Activated CD4-positive, alpha-beta T cell treated with anti-CD3 and anti-CD28 coated beads, Interleukin-2, amount 10 ng/mL, durations not matched to agents 24 days and 14 days (primary cell): ENCODE measurements at regions of chr21 and their contacts with region 1.

Region 1: DNA sequence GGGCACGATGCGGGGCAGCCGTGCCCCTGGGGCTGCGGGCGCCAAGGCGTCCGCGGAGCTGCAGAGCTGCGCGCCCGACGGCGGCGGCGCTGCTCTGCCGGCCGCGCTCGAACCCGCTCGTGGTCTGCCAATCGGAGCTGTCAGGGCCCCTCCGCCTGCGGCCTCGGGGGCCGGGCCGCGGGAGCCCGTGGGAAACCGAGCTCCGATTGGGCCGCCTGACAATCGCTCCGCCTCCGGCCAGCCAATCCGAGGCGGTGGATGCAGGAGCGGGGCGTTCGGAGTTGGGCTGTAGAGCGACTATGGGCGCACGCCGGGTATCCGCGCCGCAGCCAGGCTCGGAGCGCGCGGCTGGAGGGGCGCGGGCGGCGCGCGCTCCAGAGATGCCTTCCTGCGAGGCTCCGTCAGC is 100.5 kb upstream of the SOD1 start:
- DNase-seq: peak; percentile 98
- H3K4me3 Mint-ChIP-seq: peak overlapping the region; percentile 88
- H3K27ac Mint-ChIP-seq: no peak overlapping the region
- H3K4me1 Mint-ChIP-seq: peaks cover 37% of the 10 kb centered on the region
- H3K27me3 Mint-ChIP-seq: peaks cover 30% of the 10 kb centered on the region

Region 2: DNA sequence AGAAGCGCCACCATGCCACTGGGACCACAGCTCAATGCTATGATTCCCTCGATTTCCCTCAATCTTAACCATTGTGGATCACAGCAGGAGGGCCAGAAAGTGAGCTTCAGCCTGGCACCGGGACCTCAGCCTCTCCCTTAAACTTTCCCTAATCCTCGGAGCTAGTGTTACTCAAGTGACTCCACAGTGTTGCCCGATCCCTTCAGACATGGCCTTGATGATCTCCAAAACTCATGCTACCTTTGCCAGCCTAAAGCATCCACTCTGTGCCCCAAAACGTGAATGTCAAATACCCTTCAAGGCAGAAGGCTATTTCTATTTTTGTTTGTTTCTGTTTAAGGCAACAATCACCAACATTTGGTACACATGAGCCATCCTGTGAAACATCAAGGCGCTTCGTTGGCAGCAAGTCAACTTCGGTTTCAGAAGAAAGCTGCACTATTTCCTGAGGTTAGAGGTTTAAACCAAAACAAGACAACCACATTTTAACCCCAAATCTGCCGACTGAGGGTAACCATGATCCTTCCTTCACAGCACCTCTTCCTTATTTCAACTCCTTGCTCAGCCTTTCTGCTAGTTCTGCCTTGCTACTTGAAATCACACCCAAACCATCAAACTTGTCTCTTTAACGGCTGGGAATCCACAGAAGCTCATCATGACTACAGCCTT is 426.3 kb before region 1 on chr21:
- intact Hi-C with region 1: loop called (anchors 5 kb)
- DNase-seq: peak; percentile 94
- H3K4me3 Mint-ChIP-seq: peak overlapping the region; percentile 76
- H3K27ac Mint-ChIP-seq: peak overlapping the region; percentile 98
- H3K4me1 Mint-ChIP-seq: peaks cover 64% of the 10 kb centered on the region
- H3K27me3 Mint-ChIP-seq: no peaks in the 10 kb centered on the region

Region 3: GRCh38 chr21:31293986-31294385 is 265.0 kb before region 1 on chr21:
- intact Hi-C with region 1: loop called (anchors 2 kb)
- DNase-seq: peak; percentile 58
- H3K4me3 Mint-ChIP-seq: peak overlapping the region; percentile 54
- H3K27ac Mint-ChIP-seq: peak overlapping the region; percentile 87
- H3K4me1 Mint-ChIP-seq: peaks cover 44% of the 10 kb centered on the region
- H3K27me3 Mint-ChIP-seq: no peaks in the 10 kb centered on the region

Region 4: DNA sequence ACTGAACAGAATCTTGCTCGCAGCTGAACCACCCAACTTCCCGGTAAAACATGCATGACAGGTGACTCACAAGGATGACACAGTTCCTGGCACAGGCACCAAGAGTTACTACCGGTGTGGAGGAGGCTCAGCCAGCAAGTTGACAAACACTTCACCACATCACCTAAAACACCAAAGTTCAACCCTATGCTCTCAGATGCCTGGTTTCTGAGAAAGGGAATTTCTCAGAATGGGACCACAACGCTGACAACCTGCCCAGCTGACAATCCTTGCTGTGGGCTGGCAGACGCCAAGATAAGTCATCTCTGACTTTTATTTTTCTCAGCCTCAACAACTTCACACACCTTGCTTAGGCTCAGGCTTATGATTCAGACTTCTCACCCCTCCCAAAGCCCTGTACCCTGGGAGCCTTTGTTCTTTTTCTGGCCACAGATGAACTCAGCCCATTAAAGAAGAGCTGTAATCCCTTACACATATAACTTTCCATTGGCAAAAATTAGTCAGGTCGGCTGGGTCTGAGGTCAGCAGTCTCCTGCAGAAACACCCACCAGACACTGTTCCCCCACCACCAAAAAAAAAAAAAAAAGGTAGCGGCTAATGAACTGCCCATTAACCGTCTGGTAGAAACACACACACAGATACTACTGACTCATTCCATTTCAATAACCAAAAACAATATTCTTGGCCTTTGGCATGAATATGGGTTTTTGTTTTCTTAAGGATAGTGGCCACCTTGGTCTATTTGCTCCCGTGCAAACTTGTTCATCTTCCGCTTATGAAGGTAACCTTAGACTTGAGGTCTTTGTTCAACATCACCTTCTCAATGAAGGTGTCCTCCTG is 204.1 kb before region 1 on chr21:
- intact Hi-C with region 1: loop called (anchors 1 kb)
- DNase-seq: peak; percentile 95
- H3K4me3 Mint-ChIP-seq: peak overlapping the region; percentile 44
- H3K27ac Mint-ChIP-seq: peak overlapping the region; percentile 87
- H3K4me1 Mint-ChIP-seq: peaks cover 40% of the 10 kb centered on the region
- H3K27me3 Mint-ChIP-seq: peaks cover 5% of the 10 kb centered on the region

Region 5: GRCh38 chr21:31509194-31510017 is 49.6 kb before region 1 on chr21:
- intact Hi-C with region 1: loop called (anchors 1 kb)
- DNase-seq: peak; percentile 95
- H3K4me3 Mint-ChIP-seq: peak overlapping the region; percentile 63
- H3K27ac Mint-ChIP-seq: peak overlapping the region; percentile 38
- H3K4me1 Mint-ChIP-seq: peaks cover 33% of the 10 kb centered on the region
- H3K27me3 Mint-ChIP-seq: peaks cover 21% of the 10 kb centered on the region

Region 6: DNA sequence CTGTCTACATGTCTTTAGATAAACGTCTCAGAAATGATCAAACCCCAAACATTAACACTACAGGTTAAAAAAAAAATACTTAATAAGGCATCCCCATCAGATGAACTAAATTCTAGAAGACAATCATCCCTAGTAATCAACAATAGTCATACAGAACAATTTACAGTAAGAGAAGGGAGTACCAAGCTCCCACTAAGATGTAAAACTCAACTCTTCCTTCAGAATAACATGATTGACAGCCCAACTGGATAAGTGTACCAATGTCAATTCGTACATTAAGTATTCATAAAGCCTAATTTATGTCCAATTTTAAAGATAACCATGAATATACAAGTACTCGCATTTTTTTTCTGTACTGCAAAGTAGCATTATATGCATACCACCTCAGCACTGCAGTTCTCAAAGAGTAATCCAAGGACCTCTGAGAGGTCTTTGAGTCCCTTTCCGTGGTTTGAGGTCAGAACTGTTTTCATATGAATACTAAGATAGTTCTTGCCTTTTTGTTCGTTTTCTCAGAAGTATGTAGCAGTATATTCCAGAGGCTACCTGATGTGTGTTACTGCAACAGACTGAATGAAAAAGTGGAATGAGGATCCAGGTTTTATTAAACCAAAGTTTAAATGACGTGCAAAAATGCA is 166.4 kb after region 1 on chr21:
- intact Hi-C with region 1: loop called (anchors 10 kb)
- DNase-seq: no peak
- H3K4me3 Mint-ChIP-seq: peak overlapping the region; percentile 8
- H3K27ac Mint-ChIP-seq: peak overlapping the region; percentile 69
- H3K4me1 Mint-ChIP-seq: peaks cover 27% of the 10 kb centered on the region
- H3K27me3 Mint-ChIP-seq: no peaks in the 10 kb centered on the region